Esophagus muscularis mucosa (tissue), 4 donors: ENCODE measurements at regions of chr17 and their contacts with region 1.

Region 1: DNA sequence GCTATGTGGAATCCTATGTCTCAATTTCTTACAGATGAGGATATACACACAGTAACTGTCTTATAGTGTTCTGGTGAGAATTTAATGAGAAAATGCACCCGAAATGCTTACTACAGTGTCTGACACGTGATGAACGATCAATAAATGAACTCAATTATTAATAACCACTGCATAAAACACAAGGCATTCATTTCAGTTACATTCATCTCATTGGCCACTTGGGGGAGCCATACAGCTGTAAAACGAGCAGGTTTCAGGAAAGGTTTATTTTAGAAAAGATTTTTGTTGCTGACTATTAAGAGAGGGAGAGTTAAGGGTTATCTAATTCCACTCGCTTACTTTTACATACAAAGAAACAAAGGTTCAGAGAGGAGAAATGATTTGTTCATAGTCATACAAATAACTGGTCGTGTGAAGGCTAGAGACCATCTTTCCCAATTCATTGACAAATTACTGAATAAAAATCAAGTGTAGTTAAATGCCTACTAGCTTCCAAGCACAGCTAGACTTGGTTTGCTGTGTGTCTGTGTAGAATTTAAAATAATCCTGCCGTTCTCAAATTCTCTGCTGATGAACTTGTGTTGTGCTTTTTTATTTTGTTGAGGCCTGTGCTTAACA is 160.1 kb downstream of the MAP2K4 start:
- DNase-seq: no peak
- H3K4me3 ChIP-seq: peak overlapping the region in 1 of 4 donors; percentile 11
- H3K27ac ChIP-seq: peak overlapping the region; percentile 54 to 76 (median 67)
- H3K4me1 ChIP-seq: peaks cover 0 to 21% (median 7%) of the 10 kb centered on the region in 4 donors
- H3K27me3 ChIP-seq: no peaks in the 10 kb centered on the region
- CTCF ChIP-seq: peak; percentile 74 to 75 (median 74)
- EP300 ChIP-seq: no peak
- POLR2A ChIP-seq: no peak

Region 2: DNA sequence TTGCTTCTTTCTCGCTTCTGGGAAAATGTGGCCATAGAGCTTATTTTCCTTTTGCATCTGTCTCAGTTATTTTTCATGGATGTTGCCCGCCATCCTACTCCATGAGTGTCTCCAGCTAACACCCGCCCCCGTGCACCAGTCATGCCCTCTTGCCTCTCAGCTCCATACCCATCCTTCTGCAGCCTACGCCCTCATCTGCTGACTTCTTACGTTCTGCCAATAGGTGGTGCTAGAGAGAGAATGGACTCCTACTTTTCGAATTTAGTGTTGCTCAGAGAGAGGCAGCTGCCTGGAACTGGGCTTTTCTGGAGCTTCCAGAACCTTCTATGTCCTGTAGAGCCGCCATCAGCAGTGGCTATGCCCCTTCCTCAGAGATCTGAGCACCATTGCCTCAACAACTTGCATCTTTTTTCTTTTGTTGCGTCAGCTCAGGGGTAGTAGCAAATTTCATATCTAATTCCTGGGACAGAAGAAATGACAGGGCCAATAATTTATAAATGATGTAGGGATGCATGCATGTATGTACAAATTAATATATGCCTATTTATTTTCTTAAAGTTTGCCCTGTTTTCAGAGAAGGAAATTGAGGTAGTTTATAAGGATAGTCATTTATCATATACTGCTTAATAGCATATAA is 365.2 kb after region 1 on chr17:
- intact Hi-C with region 1: loop called (anchors 10 kb)
- DNase-seq: no peak
- H3K4me3 ChIP-seq: no peak overlapping the region
- H3K27ac ChIP-seq: no peak overlapping the region
- H3K4me1 ChIP-seq: peaks cover 0 to 12% (median 5%) of the 10 kb centered on the region in 4 donors
- H3K27me3 ChIP-seq: no peaks in the 10 kb centered on the region
- CTCF ChIP-seq: peak; percentile 67 to 81 (median 69)
- EP300 ChIP-seq: no peak
- POLR2A ChIP-seq: no peak